ENCODE measurements at regions of chr5 and their contacts with region 1.

Region 1: DNA sequence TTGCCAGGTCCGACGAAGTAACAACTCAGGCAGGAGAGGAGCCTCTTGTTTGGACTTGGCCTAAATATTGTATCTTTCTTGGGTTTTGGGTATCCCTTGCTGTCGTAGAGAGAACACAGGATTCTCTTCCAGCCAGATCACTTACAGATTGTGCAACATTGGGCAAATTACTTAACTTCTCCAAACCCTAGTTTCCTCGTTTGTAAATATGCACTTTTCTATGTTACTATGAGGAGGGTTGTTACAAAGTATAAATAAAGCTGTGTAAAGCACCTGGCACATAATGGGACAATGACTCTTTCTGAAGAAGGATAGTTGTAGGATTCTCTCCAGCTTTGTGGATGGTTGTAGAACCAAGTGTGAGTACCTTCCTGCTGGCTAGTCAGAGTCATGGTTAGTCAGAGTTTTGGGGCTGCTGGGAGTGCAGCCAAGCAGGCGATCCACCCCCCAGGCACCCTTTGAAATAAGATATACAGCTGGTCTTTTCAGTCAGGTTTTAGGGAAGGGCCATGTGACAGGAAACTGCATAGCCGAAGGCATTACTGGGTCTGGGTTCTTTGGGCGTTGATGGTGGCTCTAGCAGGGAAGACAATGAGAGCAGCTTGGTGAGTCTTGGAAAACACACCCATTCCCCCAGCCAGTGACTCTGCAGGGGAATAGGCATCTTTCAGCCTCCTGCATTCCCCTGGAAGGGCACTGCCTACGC is 49.9 kb upstream of the GDNF start:
- DNase-seq: peak; percentile 95
- H3K4me3 Mint-ChIP-seq: peak overlapping the region; percentile 13
- H3K27ac Mint-ChIP-seq: peak overlapping the region; percentile 77
- H3K4me1 Mint-ChIP-seq: peaks cover 32% of the 10 kb centered on the region
- H3K27me3 Mint-ChIP-seq: no peaks in the 10 kb centered on the region
- CTCF ChIP-seq: no peak

Region 2: DNA sequence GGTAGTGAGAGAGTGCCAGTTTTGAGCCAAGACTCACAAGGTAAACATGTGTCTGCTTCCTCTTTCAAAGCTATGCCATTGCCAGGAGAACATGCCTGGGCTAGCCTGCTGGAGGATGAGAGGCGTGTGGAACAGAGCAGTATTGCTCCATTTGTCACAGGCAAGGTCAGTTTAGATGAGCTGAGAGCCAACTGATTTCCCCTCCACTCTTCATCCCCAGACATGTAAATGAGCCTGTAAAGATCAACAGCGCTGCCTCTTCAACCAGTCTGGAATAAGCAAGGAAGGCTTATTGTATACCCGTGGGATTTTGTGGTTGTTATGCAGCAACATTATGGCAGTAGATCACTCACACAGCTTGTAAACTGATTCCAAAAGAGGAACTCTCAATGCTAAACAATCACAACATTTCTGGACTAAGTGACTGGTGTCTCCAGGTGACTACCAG is 41.8 kb before region 1 on chr5:
- CTCF ChIA-PET with region 1: no interaction called
- POLR2A ChIA-PET with region 1: interaction called, 12 read pairs
- intact Hi-C with region 1: no loop called
- DNase-seq: peak; percentile 93
- H3K4me3 Mint-ChIP-seq: no peak overlapping the region
- H3K27ac Mint-ChIP-seq: peak overlapping the region; percentile 93
- H3K4me1 Mint-ChIP-seq: peaks cover 11% of the 10 kb centered on the region
- H3K27me3 Mint-ChIP-seq: no peaks in the 10 kb centered on the region
- CTCF ChIP-seq: no peak

Region 3: DNA sequence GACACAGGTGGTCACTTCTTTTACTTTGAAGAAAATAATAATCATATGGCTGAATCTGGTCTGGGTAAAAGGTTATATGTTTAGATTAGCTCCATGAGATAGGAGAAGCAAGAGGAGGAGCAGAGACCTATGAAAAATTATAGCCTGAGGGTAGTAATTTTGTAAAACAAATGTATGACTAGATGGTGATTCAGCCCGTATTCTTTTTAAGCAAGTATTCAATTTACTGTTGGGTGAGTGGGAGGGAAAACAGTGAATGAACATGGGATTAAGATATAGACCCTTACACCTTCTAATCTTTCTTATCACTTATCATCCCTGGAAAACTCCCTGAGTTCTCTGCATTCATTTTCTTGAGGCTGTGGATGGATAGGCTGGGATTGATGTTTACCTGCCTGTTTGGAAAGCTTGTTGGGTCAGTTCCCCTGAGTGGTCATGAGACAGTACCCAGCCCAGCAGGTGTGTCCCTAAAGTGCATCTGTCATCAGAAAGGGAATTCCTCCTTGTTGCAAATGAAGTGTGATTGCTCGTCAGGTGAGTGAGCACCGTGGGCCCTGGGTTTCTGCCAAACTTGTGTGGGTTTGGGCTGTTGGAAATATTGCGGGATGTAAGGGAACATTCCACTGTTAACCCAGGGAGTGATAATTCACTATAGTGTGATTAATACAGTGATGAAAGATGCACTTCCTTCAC is 51.3 kb after region 1 on chr5:
- CTCF ChIA-PET with region 1: interaction called, 3 read pairs
- POLR2A ChIA-PET with region 1: interaction called, 14 read pairs
- intact Hi-C with region 1: no loop called
- DNase-seq: peak; percentile 77
- H3K4me3 Mint-ChIP-seq: no peak overlapping the region
- H3K27ac Mint-ChIP-seq: peak overlapping the region; percentile 83
- H3K4me1 Mint-ChIP-seq: peaks cover 13% of the 10 kb centered on the region
- H3K27me3 Mint-ChIP-seq: no peaks in the 10 kb centered on the region
- CTCF ChIP-seq: no peak

Measured in MCF 10A (cell line).